Stomach (tissue), 19 donors: ENCODE measurements at regions of chr12 and their contacts with region 1.

Region 1: GRCh38 chr12:104381731-104382480 is 74.8 kb upstream of the CHST11 start:
- DNase-seq: peak; percentile 88 to 92
- H3K4me3 ChIP-seq: no peak overlapping the region
- H3K27ac ChIP-seq: no peak overlapping the region
- H3K4me1 ChIP-seq: peaks cover 0 to 11% (median 9%) of the 10 kb centered on the region in 4 donors
- H3K27me3 ChIP-seq: no peaks in the 10 kb centered on the region
- CTCF ChIP-seq: peak in 5 of 7 experiments; percentile 79 to 97 (median 92)
- EP300 ChIP-seq: no peak
- POLR2A ChIP-seq: no peak

Region 2: DNA sequence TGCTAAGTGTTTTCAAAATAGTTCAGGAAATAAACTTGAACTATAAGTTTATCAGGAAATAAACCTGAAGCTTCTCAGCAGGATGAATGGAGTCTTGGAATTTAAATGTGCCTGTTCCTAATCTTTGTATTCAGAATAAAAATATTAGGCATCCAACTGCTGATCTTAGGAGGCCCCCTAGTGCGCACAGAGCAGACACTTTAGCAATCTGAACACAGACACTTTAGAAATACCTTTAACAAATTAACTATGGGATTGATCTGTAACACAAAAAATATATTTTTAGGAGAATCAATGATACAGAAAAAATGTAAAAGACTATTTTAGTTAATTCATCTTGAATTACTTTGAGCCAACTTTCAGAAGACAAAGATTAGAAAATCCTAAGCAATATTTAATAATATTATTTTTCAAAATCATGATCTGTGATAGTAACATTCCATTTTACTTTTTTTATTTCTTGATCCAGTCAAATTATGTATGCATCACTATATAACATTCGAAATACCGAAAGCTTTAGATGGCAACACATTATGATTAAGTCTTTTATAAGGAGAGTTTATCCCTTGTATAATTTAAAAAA is 495.3 kb after region 1 on chr12:
- intact Hi-C with region 1: loop called (anchors 5 kb)
- DNase-seq: peak; percentile 26 to 69
- H3K4me3 ChIP-seq: no peak overlapping the region
- H3K27ac ChIP-seq: no peak overlapping the region
- H3K4me1 ChIP-seq: no peaks in the 10 kb centered on the region
- H3K27me3 ChIP-seq: no peaks in the 10 kb centered on the region
- CTCF ChIP-seq: peak in 5 of 7 experiments; percentile 12 to 77 (median 28)
- EP300 ChIP-seq: no peak
- POLR2A ChIP-seq: no peak